Pancreas (tissue), 10 donors: ENCODE measurements at regions of chr3 and their contacts with region 1.

Region 1: DNA sequence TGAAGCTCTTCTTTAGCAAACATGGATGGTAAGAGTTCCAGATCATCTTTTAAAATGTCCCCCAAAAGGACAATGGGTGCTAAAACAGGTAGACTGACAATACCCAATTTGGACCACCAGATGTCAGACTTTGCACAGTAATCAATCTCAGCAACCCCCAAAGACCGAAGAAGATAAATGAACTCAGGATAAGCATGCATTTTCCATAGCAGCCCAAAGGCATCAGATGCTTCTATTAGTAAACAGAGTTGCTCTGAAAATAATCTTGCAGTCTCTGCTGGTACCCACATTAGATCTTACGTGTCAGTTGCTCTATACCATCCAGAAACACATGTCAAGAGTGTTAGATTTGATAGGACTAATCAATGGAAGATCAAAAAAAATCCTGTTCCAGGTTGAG is 20.6 kb downstream of the MYH15 start:
- DNase-seq: peak in 1 of 6 donors; percentile 18
- ATAC-seq: peak in 3 of 4 donors; percentile 76 to 82 (median 79)
- H3K4me3 ChIP-seq: no peak overlapping the region
- H3K27ac ChIP-seq: no peak overlapping the region
- H3K4me1 ChIP-seq: no peaks in the 10 kb centered on the region
- H3K27me3 ChIP-seq: no peaks in the 10 kb centered on the region
- CTCF ChIP-seq: peak; percentile 31 to 56 (median 50)

Region 2: DNA sequence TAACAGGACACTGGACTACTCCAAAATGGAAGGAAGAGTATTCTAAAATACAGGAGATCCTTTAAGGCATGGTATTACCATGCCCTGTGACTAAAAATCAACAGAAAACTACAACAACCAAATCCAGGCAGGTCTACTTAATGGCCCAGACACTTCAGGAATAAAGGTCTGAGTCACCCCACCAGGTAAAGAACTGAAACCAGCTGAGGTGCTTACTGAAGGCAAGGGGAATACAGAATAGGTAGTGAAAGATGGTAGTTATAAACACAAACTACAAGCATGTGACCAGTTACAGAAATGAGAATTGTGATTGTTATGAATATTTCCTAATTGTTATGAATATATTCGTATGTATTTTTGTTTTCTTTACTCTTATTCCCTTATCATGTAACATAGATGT is 280.9 kb before region 1 on chr3:
- intact Hi-C with region 1: no loop called
- DNase-seq: no peak
- ATAC-seq: peak in 1 of 4 donors; percentile 30
- H3K4me3 ChIP-seq: no peak overlapping the region
- H3K27ac ChIP-seq: no peak overlapping the region
- H3K4me1 ChIP-seq: peaks cover 0 to 7% (median 0%) of the 10 kb centered on the region in 3 donors
- H3K27me3 ChIP-seq: no peaks in the 10 kb centered on the region
- CTCF ChIP-seq: no peak

Region 3: DNA sequence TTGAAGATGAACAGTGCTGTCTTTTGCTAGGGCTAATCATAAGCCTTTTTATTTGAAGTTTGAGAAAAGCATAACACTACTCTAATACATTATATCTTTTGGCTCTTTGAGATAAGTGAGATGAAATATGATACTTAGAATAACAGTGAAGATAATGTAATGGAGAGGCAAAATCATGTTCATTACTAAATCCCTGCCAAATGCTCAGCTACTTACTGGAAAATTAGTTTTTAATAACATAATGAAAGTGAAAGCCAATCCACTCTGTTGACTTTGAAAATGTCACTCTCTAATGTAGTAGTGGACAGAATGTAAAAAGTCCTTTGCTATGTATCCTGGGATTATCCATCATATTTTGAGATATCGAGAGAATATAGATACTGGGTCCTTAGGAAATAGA is 56.5 kb after region 1 on chr3:
- intact Hi-C with region 1: loop called in 2 of 3 experiments (anchors 5 to 10 kb)
- DNase-seq: no peak
- ATAC-seq: peak in 2 of 4 donors; percentile 39 to 46
- H3K4me3 ChIP-seq: no peak overlapping the region
- H3K27ac ChIP-seq: no peak overlapping the region
- H3K4me1 ChIP-seq: no peaks in the 10 kb centered on the region
- H3K27me3 ChIP-seq: no peaks in the 10 kb centered on the region
- CTCF ChIP-seq: no peak

Region 4: DNA sequence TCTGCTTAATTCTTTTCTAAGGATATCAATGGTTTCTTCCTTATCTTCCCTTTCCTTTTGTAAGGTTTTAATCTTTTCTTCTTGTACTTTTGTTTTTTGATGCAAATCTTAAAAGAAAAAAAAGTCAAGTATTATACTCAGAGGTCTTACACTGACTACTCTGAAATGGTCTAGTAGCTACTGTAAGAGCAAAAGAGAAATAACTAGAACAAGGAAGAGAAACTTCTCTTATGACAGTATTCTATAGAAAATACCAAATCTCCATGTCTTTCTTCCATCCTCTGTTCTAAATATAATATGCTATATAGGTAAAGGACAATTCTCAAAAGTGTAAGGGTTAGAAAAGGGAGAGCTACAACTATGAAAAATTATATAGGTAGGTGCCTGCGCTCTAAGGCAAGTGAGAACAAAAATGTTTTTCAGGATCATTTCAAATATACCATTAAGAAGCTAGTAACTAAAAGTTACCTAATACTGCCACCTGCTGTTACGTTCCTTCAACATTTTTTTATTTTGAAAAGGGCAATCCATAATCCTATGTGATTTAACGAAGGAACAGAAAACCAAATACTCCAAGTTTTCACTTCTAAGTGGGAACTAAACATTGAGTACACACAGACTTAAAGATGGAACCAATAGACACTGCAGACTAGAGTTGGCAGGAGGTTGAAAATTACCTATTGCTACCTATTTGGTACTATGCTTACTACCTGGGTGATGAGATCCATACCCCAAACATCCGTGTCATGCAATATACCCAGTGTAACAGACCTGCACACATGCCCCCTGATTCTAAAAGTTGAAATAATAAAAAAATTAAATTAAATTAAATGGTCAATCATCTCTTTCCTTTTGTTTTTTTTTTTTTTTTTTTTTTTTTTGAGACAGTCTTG is 62.7 kb after region 1 on chr3:
- intact Hi-C with region 1: loop called in 2 of 3 experiments (anchors 5 to 10 kb)
- DNase-seq: no peak
- ATAC-seq: peak in 3 of 4 donors; percentile 67 to 73 (median 71)
- H3K4me3 ChIP-seq: no peak overlapping the region
- H3K27ac ChIP-seq: no peak overlapping the region
- H3K4me1 ChIP-seq: peaks cover 0 to 20% (median 16%) of the 10 kb centered on the region in 3 donors
- H3K27me3 ChIP-seq: no peaks in the 10 kb centered on the region
- CTCF ChIP-seq: peak in 2 of 4 donors; percentile 16 to 31

Region 5: GRCh38 chr3:108677811-108678210 is 188.0 kb after region 1 on chr3:
- intact Hi-C with region 1: no loop called
- DNase-seq: no peak
- ATAC-seq: no peak
- H3K4me3 ChIP-seq: no peak overlapping the region
- H3K27ac ChIP-seq: no peak overlapping the region
- H3K4me1 ChIP-seq: no peaks in the 10 kb centered on the region
- H3K27me3 ChIP-seq: no peaks in the 10 kb centered on the region
- CTCF ChIP-seq: no peak